CD4-positive, alpha-beta T cell (primary cell): ENCODE measurements at regions of chr22 and their contacts with region 1.

Region 1: GRCh38 chr22:50620593-50621355 is 7.2 kb downstream of the ARSA start:
- DNase-seq: peak; percentile 39 to 95 (median 64)
- ATAC-seq: peak; percentile 66
- H3K4me3 ChIP-seq: peak overlapping the region; percentile 53
- H3K4me3 Mint-ChIP-seq: peak overlapping the region; percentile 90
- H3K27ac ChIP-seq: peak overlapping the region; percentile 85 to 92
- H3K27ac Mint-ChIP-seq: peak overlapping the region; percentile 98
- H3K4me1 ChIP-seq: peaks cover 36% of the 10 kb centered on the region
- H3K4me1 Mint-ChIP-seq: peaks cover 35% of the 10 kb centered on the region
- H3K27me3 ChIP-seq: no peaks in the 10 kb centered on the region
- H3K27me3 Mint-ChIP-seq: no peaks in the 10 kb centered on the region
- CTCF ChIP-seq: peak; percentile 79

Region 2: DNA sequence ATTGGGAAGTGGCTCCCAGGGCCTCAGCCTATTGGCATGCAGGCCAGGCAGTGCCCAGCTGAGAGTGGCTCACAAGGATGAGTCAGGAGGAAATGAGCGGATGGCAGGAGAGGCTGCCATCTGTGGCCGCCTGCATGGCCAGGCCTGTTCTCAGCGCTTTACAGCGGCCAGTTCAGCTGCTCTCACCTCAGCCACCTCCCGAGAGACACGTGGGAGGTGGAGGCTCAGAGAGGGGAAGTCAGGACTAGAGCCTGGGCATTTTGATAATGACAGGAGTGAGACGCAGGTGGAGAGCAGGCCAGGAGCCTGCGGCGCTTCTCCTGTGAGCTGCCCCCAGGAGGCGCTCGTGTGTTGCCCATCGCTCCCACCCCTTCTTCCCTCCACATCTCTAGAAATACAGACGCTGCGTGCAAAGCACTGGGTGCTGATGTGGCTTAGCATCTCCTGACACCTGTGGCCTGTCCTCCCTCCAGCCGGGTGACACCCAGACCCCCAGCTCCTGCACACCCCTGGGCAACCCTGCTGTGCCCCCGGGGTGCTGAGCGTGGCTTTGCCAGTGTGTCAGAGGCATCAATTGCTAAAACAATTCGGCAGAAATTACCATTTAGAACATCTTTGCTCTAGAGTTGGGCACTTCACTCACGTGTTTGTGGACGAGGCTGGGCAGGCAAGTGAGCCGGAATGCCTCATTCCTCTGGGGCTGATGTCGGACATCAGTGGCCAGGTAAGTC is 471.6 kb before region 1 on chr22:
- CTCF ChIA-PET with region 1: interaction called, 3 read pairs
- POLR2A ChIA-PET with region 1: no interaction called
- intact Hi-C with region 1: loop called in 1 of 2 experiments (anchors 5 kb)
- DNase-seq: peak; percentile 62 to 90 (median 71)
- ATAC-seq: peak; percentile 100
- H3K4me3 ChIP-seq: no peak overlapping the region
- H3K4me3 Mint-ChIP-seq: no peak overlapping the region
- H3K27ac ChIP-seq: no peak overlapping the region
- H3K27ac Mint-ChIP-seq: no peak overlapping the region
- H3K4me1 ChIP-seq: peaks cover 6% of the 10 kb centered on the region
- H3K4me1 Mint-ChIP-seq: peaks cover 4% of the 10 kb centered on the region
- H3K27me3 ChIP-seq: no peaks in the 10 kb centered on the region
- H3K27me3 Mint-ChIP-seq: no peaks in the 10 kb centered on the region
- CTCF ChIP-seq: peak; percentile 89

Region 3: GRCh38 chr22:50250555-50251476 is 370.0 kb before region 1 on chr22 and contains the start of gene HDAC10:
- CTCF ChIA-PET with region 1: interaction called, 3 read pairs
- POLR2A ChIA-PET with region 1: interaction called, 31 read pairs
- intact Hi-C with region 1: no loop called
- DNase-seq: peak; percentile 60 to 91 (median 77)
- ATAC-seq: peak; percentile 79
- H3K4me3 ChIP-seq: peak within 1 kb of the TSS; percentile 87
- H3K4me3 Mint-ChIP-seq: peak within 1 kb of the TSS; percentile 84
- H3K27ac ChIP-seq: peak within 1 kb of the TSS in 1 of 2 donors; percentile 53
- H3K27ac Mint-ChIP-seq: peak within 1 kb of the TSS; percentile 55
- H3K4me1 ChIP-seq: peaks cover 57% of the 10 kb centered on the region
- H3K4me1 Mint-ChIP-seq: peaks cover 26% of the 10 kb centered on the region
- H3K27me3 ChIP-seq: no peaks in the 10 kb centered on the region
- H3K27me3 Mint-ChIP-seq: no peaks in the 10 kb centered on the region
- CTCF ChIP-seq: no peak
- total RNA-seq, gene HDAC10: 87.3 to 88.7 TPM

Region 4: DNA sequence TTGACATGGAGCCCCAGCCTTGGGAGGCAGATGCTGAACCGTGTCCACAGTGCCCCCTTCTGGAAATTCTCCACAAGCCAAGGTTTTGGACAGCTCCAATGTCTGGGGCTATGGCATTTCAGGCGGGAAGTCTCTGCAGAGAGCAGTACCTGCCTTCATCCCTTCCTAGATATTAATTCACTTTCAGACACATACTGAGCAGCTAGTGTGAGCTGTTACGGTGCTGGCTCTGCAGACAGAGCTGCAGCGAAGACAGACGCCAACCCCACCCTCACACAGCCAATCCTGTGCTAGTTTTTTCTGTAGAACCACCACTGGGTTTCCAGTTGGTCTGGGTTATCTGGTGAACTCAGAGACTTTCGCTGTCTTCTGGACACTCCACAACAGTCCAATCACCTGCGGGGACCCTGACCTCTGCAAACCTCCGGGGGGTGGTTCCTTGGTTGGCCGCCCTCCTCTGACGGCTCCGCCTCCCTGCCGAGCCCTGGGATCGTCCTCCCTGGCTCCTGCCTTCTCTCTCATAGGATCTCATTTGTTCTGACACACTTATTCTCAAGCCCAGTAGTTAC is 122.4 kb before region 1 on chr22:
- CTCF ChIA-PET with region 1: interaction called, 8 read pairs
- POLR2A ChIA-PET with region 1: interaction called, 11 read pairs
- intact Hi-C with region 1: no loop called
- DNase-seq: peak; percentile 52 to 84 (median 64)
- ATAC-seq: peak; percentile 97
- H3K4me3 ChIP-seq: no peak overlapping the region
- H3K4me3 Mint-ChIP-seq: no peak overlapping the region
- H3K27ac ChIP-seq: no peak overlapping the region
- H3K27ac Mint-ChIP-seq: no peak overlapping the region
- H3K4me1 ChIP-seq: peaks cover 5% of the 10 kb centered on the region
- H3K4me1 Mint-ChIP-seq: peaks cover 9% of the 10 kb centered on the region
- H3K27me3 ChIP-seq: no peaks in the 10 kb centered on the region
- H3K27me3 Mint-ChIP-seq: no peaks in the 10 kb centered on the region
- CTCF ChIP-seq: peak; percentile 79

Region 5: GRCh38 chr22:50537765-50538164 is 83.0 kb before region 1 on chr22:
- CTCF ChIA-PET with region 1: interaction called, 11 read pairs
- POLR2A ChIA-PET with region 1: interaction called, 34 read pairs
- intact Hi-C with region 1: no loop called
- DNase-seq: no peak
- ATAC-seq: no peak
- H3K4me3 ChIP-seq: no peak overlapping the region
- H3K4me3 Mint-ChIP-seq: no peak overlapping the region
- H3K27ac ChIP-seq: peak overlapping the region; percentile 92 to 99
- H3K27ac Mint-ChIP-seq: peak overlapping the region; percentile 99
- H3K4me1 ChIP-seq: peaks cover 51% of the 10 kb centered on the region
- H3K4me1 Mint-ChIP-seq: peaks cover 43% of the 10 kb centered on the region
- H3K27me3 ChIP-seq: no peaks in the 10 kb centered on the region
- H3K27me3 Mint-ChIP-seq: peaks cover 9% of the 10 kb centered on the region
- CTCF ChIP-seq: no peak

Region 6: DNA sequence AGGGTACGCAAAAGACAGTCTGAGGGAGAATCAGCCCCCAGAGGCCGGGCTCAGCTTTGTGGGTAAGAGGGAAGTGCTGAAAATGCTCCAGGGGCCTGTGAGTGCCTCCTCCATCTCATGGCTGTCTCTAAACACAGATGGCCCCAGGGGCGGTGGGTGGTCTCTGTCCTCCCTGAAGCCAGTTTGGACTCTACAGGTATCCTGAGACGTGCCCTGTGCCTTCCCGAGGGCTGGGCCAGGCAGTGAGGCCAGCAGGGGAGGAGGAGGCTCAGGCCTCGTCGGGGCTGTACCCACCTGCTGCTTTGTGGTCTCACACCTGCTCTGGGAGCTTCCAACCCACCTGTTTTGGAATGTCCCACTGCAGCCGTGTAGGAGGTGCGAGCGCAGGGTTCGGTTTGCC is 49.1 kb before region 1 on chr22:
- CTCF ChIA-PET with region 1: no interaction called
- POLR2A ChIA-PET with region 1: no interaction called
- intact Hi-C with region 1: no loop called
- DNase-seq: no peak
- ATAC-seq: no peak
- H3K4me3 ChIP-seq: no peak overlapping the region
- H3K4me3 Mint-ChIP-seq: no peak overlapping the region
- H3K27ac ChIP-seq: no peak overlapping the region
- H3K27ac Mint-ChIP-seq: no peak overlapping the region
- H3K4me1 ChIP-seq: no peaks in the 10 kb centered on the region
- H3K4me1 Mint-ChIP-seq: no peaks in the 10 kb centered on the region
- H3K27me3 ChIP-seq: no peaks in the 10 kb centered on the region
- H3K27me3 Mint-ChIP-seq: no peaks in the 10 kb centered on the region
- CTCF ChIP-seq: no peak

Region 7: GRCh38 chr22:50582562-50583293 is 38.0 kb before region 1 on chr22 and contains the start of gene CHKB:
- CTCF ChIA-PET with region 1: no interaction called
- POLR2A ChIA-PET with region 1: interaction called, 59 read pairs
- intact Hi-C with region 1: loop called (anchors 1 to 2 kb)
- DNase-seq: peak; percentile 95 to 99 (median 98)
- ATAC-seq: peak; percentile 92
- H3K4me3 ChIP-seq: peak within 1 kb of the TSS; percentile 63
- H3K4me3 Mint-ChIP-seq: peak within 1 kb of the TSS; percentile 100
- H3K27ac ChIP-seq: peak within 1 kb of the TSS; percentile 91 to 95
- H3K27ac Mint-ChIP-seq: peak within 1 kb of the TSS; percentile 98
- H3K4me1 ChIP-seq: peaks cover 31% of the 10 kb centered on the region
- H3K4me1 Mint-ChIP-seq: peaks cover 35% of the 10 kb centered on the region
- H3K27me3 ChIP-seq: no peaks in the 10 kb centered on the region
- H3K27me3 Mint-ChIP-seq: no peaks in the 10 kb centered on the region
- CTCF ChIP-seq: no peak
- total RNA-seq, gene CHKB: 152 to 156 TPM